ENCODE measurements at regions of chr7 and their contacts with region 1.

Region 1: GRCh38 chr7:1086588-1087464 is 1.1 kb upstream of the GPER1 start:
- DNase-seq: peak in 8 of 10 donors; percentile 50 to 77 (median 59)
- H3K4me3 ChIP-seq: peak overlapping the region; percentile 4 to 66 (median 49)
- H3K27ac ChIP-seq: peak overlapping the region in 51 of 59 donors; percentile 5 to 88 (median 56)
- H3K27me3 ChIP-seq: no peaks in the 10 kb centered on the region
- CTCF ChIP-seq: peak; percentile 74 to 98 (median 91)

Region 2: GRCh38 chr7:1123715-1124114 is 36.9 kb after region 1 on chr7:
- intact Hi-C with region 1: loop called (anchors 5 kb)
- DNase-seq: peak in 8 of 10 donors; percentile 52 to 77 (median 69)
- H3K4me3 ChIP-seq: peak overlapping the region in 55 of 59 donors; percentile 2 to 66 (median 41)
- H3K27ac ChIP-seq: peak overlapping the region in 58 of 59 donors; percentile 41 to 93 (median 79)
- H3K27me3 ChIP-seq: no peaks in the 10 kb centered on the region
- CTCF ChIP-seq: peak in 54 of 56 donors; percentile 11 to 76 (median 62)

Region 3: DNA sequence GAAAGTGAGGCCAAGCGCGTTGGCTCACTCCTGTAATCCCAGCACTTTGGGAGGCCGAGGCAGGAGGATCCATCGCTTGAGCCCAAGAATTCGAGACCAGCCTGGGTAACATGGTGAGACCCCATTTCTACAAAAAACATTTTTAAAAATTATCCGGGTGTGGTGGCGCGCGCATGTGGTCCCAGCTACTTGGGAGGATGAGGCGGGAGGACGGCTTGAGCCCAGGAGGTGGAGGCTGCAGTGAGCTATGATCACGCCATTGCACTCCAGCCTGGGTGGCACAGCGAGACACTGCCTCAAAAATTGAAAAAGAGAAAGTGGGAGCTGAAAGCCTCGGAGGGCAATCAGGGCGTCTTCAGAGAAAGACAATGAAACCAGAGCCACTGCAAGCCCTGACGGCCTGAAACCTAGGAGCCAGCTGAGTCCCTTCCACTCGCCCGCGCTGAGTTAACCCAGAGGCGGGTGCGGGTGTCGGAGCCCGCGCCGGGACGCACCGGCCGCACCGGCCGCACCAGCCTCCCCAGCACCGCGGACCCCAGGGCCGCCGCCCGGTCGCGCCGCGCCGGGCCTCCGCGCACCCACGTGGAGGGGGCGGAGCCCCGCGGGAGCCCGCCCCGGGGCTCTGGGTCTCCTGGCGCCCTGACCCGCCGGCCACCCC is 50.8 kb after region 1 on chr7:
- intact Hi-C with region 1: loop called in 1 of 2 experiments (anchors 5 kb)
- DNase-seq: peak in 3 of 10 donors; percentile 23 to 35 (median 30)
- H3K4me3 ChIP-seq: peak overlapping the region; percentile 50 to 99 (median 85)
- H3K27ac ChIP-seq: peak overlapping the region in 36 of 59 donors; percentile 15 to 82 (median 64)
- H3K27me3 ChIP-seq: no peaks in the 10 kb centered on the region
- CTCF ChIP-seq: peak in 1 of 56 donors; percentile 6

Region 4: GRCh38 chr7:1175967-1176851 is 89.4 kb after region 1 on chr7:
- intact Hi-C with region 1: loop called in 1 of 2 experiments (anchors 10 kb)
- DNase-seq: peak; percentile 61 to 90 (median 78)
- H3K4me3 ChIP-seq: peak overlapping the region in 43 of 59 donors; percentile 2 to 56 (median 30)
- H3K27ac ChIP-seq: peak overlapping the region in 6 of 59 donors; percentile 9 to 76 (median 34)
- H3K27me3 ChIP-seq: peaks cover 0 to 9% (median 0%) of the 10 kb centered on the region in 45 donors
- CTCF ChIP-seq: peak; percentile 52 to 93 (median 85)